Endothelial cell of umbilical vein (primary cell): ENCODE measurements at regions of chr13 and their contacts with region 1.

Region 1: GRCh38 chr13:97333983-97334382 is 100.0 kb upstream of the RAP2A start:
- DNase-seq: peak; percentile 43
- H3K4me3 ChIP-seq: no peak overlapping the region
- H3K27ac ChIP-seq: no peak overlapping the region
- H3K4me1 ChIP-seq: peaks cover 19% of the 10 kb centered on the region
- H3K27me3 ChIP-seq: no peaks in the 10 kb centered on the region
- CTCF ChIP-seq: peak in 1 of 2 donors; percentile 2
- POLR2A ChIP-seq: no peak

Region 2: GRCh38 chr13:97302611-97303010 is 31.4 kb before region 1 on chr13:
- CTCF ChIA-PET with region 1: interaction called, 10 read pairs
- POLR2A ChIA-PET with region 1: no interaction called
- dilution Hi-C with region 1: no loop called
- intact Hi-C with region 1: no loop called
- DNase-seq: peak; percentile 57
- H3K4me3 ChIP-seq: no peak overlapping the region
- H3K27ac ChIP-seq: peak overlapping the region; percentile 4
- H3K4me1 ChIP-seq: peaks cover 44% of the 10 kb centered on the region
- H3K27me3 ChIP-seq: no peaks in the 10 kb centered on the region
- CTCF ChIP-seq: no peak
- POLR2A ChIP-seq: no peak

Region 3: DNA sequence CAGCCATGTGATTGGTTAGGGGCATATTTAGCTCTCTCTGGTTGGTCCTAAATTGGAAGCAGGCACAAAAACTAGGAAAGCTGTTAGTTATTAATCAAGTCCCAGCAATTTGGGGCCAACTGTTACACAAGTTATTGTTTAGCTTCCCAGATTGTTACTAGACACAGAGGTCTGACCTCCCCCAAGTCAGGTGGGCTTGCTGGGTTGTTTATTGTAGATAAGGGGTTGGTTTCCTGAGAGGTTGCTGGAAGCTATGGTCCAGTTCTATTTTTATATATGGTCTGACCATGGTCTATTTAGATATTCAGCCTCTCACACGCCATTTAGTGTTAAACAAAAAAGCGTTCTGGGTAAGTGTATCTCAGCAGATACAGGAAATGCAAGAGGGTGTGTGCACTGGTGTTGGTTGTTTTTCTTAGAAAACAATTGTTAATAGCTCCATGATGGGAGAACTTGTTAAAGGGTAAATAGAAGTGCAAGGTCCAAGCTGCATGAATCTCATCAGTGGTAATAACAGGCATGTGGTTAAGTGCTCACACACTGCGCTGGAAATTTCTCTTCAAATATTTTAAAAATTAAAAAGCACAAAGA is 250.0 kb after region 1 on chr13:
- CTCF ChIA-PET with region 1: no interaction called
- POLR2A ChIA-PET with region 1: no interaction called
- dilution Hi-C with region 1: no loop called
- intact Hi-C with region 1: no loop called
- DNase-seq: no peak
- H3K4me3 ChIP-seq: no peak overlapping the region
- H3K27ac ChIP-seq: no peak overlapping the region
- H3K4me1 ChIP-seq: no peaks in the 10 kb centered on the region
- H3K27me3 ChIP-seq: peaks cover 4 to 6% of the 10 kb centered on the region in 2 experiments
- CTCF ChIP-seq: no peak
- POLR2A ChIP-seq: no peak